ENCODE measurements at regions of chr13 and their contacts with region 1.

Region 1: DNA sequence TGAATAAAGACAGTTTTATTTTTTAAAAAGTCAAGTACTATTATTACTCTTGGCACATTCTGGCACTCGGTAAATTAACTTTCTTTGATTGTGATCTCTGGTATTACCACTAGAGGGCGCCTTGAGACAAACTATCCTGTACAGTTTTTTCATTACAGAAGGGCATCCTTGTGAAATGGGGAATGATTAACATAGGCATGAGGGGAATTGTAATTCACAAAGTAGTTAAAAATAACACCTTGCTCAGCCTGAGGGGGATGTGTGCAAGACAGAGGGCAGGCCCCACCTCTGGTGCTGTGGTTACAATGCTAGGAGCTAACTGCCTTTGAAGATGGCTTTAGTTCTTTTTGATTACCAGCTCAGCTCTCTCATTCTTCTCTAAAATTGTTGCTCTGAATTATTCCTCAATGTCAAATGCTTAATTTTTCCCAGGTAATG is 24.2 kb upstream of the C1QTNF9B start:
- DNase-seq: no peak
- ATAC-seq: peak; percentile 36
- H3K4me3 Mint-ChIP-seq: no peak overlapping the region
- H3K27ac Mint-ChIP-seq: no peak overlapping the region
- H3K4me1 Mint-ChIP-seq: no peaks in the 10 kb centered on the region
- H3K27me3 Mint-ChIP-seq: peaks cover 23% of the 10 kb centered on the region

Region 2: GRCh38 chr13:23960566-23961156 is 39.2 kb after region 1 on chr13:
- CTCF ChIA-PET with region 1: interaction called, 6 read pairs
- POLR2A ChIA-PET with region 1: no interaction called
- intact Hi-C with region 1: loop called in 1 of 2 experiments (anchors 5 kb)
- DNase-seq: peak; percentile 16
- ATAC-seq: peak; percentile 34
- H3K4me3 Mint-ChIP-seq: no peak overlapping the region
- H3K27ac Mint-ChIP-seq: no peak overlapping the region
- H3K4me1 Mint-ChIP-seq: peaks cover 30% of the 10 kb centered on the region
- H3K27me3 Mint-ChIP-seq: no peaks in the 10 kb centered on the region

Region 3: DNA sequence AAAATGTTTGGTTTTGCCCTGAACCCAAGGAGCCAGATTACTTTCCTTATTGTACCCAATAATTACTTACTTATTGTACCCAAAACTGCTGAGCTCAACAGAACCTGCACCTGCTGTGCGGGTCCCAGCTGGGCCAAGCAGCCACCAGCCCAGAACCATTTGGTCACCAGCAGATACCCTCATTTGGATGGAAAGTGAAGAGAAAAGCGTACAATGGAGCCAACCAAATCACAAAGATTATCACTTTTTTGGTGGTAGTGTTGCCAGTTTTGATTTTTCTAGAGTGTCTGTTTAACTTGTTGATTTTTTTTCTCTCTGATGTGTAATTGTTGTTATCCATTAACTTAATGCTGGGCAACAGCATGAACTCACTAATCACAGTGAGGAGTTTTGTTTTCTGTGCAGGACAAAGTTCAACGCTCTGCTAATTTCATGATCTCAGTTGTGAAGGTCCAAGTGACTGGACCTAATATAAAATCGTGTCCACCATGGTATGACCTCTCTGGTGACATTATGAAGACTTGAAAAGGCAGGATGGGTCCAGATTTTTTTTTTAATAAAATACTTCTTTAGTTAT is 262.9 kb after region 1 on chr13:
- CTCF ChIA-PET with region 1: no interaction called
- POLR2A ChIA-PET with region 1: no interaction called
- intact Hi-C with region 1: no loop called
- DNase-seq: no peak
- ATAC-seq: no peak
- H3K4me3 Mint-ChIP-seq: no peak overlapping the region
- H3K27ac Mint-ChIP-seq: no peak overlapping the region
- H3K4me1 Mint-ChIP-seq: peaks cover 37% of the 10 kb centered on the region
- H3K27me3 Mint-ChIP-seq: no peaks in the 10 kb centered on the region

Region 4: GRCh38 chr13:24220086-24220703 is 298.7 kb after region 1 on chr13:
- CTCF ChIA-PET with region 1: interaction called, 4 read pairs
- POLR2A ChIA-PET with region 1: no interaction called
- intact Hi-C with region 1: loop called (anchors 1 kb)
- DNase-seq: peak; percentile 69
- ATAC-seq: peak; percentile 98
- H3K4me3 Mint-ChIP-seq: no peak overlapping the region
- H3K27ac Mint-ChIP-seq: no peak overlapping the region
- H3K4me1 Mint-ChIP-seq: peaks cover 29% of the 10 kb centered on the region
- H3K27me3 Mint-ChIP-seq: no peaks in the 10 kb centered on the region

Measured in activated CD4-positive, alpha-beta T cell treated with anti-CD3 and anti-CD28 coated beads for 36 hours (primary cell).